ENCODE measurements at regions of chr9 and their contacts with region 1.

Region 1: DNA sequence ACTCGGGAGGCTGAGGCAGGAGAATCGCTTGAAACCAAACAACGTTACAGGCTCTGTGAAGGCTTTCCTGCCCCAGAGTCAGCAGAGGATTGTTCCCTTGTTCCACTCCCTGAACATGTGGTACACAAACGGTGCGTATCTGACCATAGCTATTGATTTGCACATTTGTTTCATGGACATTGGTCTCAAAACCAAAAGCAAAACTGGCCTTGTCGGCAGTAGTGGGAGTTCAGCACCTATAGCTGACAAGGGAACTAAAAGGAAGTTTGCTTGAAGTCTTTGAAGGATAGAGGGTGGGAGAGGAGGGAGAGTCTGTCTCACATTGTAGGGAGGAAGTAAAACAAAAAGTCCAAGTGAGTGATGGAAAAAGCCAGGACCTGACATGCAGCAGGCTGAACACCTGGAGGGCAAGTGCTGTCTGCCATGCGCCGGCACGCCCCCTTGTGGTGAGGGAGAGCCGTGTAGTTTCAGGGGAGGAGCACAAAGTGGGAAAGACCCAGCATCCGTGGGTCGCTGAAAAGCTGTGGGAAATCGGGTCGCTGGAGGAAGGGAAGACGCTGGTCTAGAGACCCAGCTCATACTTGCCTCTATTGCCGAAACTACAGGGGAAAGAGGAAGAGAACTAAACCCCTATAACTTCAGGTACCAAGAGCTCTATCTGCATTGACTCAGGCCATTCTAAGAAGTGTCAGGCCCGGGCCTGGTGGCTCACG is 58.0 kb downstream of the RAD23B start:
- DNase-seq: peak; percentile 92
- ATAC-seq: peak; percentile 90
- H3K4me3 Mint-ChIP-seq: no peak overlapping the region
- H3K27ac Mint-ChIP-seq: peak overlapping the region; percentile 74
- H3K4me1 Mint-ChIP-seq: peaks cover 8% of the 10 kb centered on the region
- H3K27me3 Mint-ChIP-seq: no peaks in the 10 kb centered on the region

Region 2: DNA sequence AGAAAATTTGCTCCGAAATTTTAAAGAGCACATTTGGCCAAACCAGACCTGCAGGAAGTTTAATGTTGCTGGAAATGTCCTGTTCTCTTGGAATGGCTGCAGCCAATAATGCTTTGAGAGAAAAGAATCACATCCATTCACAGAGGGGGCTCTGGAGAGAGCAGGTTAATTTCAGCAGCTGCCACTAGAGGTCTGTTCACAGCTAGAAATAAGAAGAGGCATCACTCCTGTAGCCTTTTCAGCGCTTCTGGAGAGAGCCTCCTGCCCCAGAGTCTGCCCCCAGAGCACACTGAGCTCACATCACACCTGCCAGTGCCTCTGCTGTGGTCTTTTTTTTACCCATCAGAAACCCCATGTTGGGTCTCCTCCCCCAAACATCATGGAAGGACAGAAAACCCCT is 182.8 kb before region 1 on chr9:
- CTCF ChIA-PET with region 1: interaction called, 5 read pairs
- POLR2A ChIA-PET with region 1: no interaction called
- intact Hi-C with region 1: loop called in 1 of 2 experiments (anchors 5 kb)
- DNase-seq: peak; percentile 12
- ATAC-seq: peak; percentile 55
- H3K4me3 Mint-ChIP-seq: no peak overlapping the region
- H3K27ac Mint-ChIP-seq: no peak overlapping the region
- H3K4me1 Mint-ChIP-seq: no peaks in the 10 kb centered on the region
- H3K27me3 Mint-ChIP-seq: peaks cover 17% of the 10 kb centered on the region

Region 3: DNA sequence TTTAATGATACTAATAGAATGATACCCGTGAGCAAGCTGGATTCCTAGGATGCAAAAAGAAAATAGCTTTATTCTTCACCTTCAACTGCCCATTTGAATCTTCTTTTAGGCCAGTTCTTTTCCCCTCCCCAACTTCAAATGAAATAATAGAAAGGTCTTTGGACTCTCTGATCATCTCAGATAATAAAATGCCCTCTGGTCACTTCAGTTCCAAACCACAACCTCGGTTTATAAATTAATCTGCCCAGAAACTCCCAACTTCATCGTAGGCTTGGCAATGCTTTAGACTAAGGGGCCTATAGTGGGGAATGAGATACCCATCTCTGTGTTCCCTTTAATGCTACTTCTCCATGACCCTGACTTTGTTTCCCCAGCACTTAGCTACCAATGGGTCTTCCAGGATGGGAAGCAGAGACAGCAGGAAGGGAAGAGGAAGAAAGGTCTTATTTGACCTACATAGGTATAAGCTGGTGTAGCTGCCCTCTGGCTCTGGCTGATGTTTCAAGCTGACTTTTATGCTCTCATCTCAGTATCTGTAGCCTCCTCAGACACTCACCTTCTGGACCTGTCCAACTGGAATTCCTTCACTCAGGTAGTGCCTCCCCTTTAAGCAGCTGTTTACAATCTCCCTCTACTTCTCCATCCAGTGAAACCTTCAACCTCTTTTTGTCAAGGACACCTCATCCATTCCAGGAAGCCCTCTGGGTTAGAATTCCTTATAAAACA is 105.1 kb before region 1 on chr9:
- CTCF ChIA-PET with region 1: interaction called, 13 read pairs
- POLR2A ChIA-PET with region 1: no interaction called
- intact Hi-C with region 1: loop called (anchors 2 kb)
- DNase-seq: no peak
- ATAC-seq: no peak
- H3K4me3 Mint-ChIP-seq: no peak overlapping the region
- H3K27ac Mint-ChIP-seq: no peak overlapping the region
- H3K4me1 Mint-ChIP-seq: peaks cover 4% of the 10 kb centered on the region
- H3K27me3 Mint-ChIP-seq: peaks cover 16% of the 10 kb centered on the region

Region 4: GRCh38 chr9:107309271-107309670 is 31.8 kb before region 1 on chr9:
- CTCF ChIA-PET with region 1: interaction called, 14 read pairs
- POLR2A ChIA-PET with region 1: no interaction called
- intact Hi-C with region 1: no loop called
- DNase-seq: no peak
- ATAC-seq: peak; percentile 42
- H3K4me3 Mint-ChIP-seq: no peak overlapping the region
- H3K27ac Mint-ChIP-seq: peak overlapping the region; percentile 11
- H3K4me1 Mint-ChIP-seq: peaks cover 69% of the 10 kb centered on the region
- H3K27me3 Mint-ChIP-seq: no peaks in the 10 kb centered on the region

Measured in activated CD4-positive, alpha-beta T cell treated with anti-CD3 and anti-CD28 coated beads for 36 hours (primary cell).